Activated CD8-positive, alpha-beta T cell treated with anti-CD3 and anti-CD28 coated beads for 36 hours (primary cell): ENCODE measurements at regions of chr6 and their contacts with region 1.

Region 1: GRCh38 chr6:104682722-104683643 is 176.7 kb downstream of the HACE1 start:
- DNase-seq: peak; percentile 82
- ATAC-seq: peak; percentile 69
- H3K4me3 Mint-ChIP-seq: no peak overlapping the region
- H3K27ac Mint-ChIP-seq: no peak overlapping the region
- H3K4me1 Mint-ChIP-seq: peaks cover 3% of the 10 kb centered on the region
- H3K27me3 Mint-ChIP-seq: no peaks in the 10 kb centered on the region
- CTCF ChIP-seq: peak; percentile 92

Region 2: DNA sequence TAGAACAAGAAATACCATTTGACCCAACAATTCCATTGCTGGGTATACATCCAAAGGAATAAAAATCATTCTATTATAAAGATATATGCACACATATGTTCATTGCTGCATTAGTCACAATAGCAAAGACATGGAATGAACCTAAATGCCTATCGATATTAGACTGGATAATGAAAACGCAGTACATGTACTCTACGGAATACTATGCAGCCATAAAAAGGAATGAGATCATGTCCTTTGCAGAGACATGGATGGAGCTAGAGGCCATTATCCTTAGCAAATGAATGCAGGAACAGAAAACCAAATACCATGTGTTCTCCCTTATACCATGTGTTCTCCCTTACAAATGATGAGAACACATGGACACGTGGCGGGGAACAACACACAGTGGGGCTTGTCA is 13.5 kb before region 1 on chr6:
- CTCF ChIA-PET with region 1: no interaction called
- POLR2A ChIA-PET with region 1: no interaction called
- intact Hi-C with region 1: no loop called
- DNase-seq: no peak
- ATAC-seq: no peak
- H3K4me3 Mint-ChIP-seq: no peak overlapping the region
- H3K27ac Mint-ChIP-seq: no peak overlapping the region
- H3K4me1 Mint-ChIP-seq: no peaks in the 10 kb centered on the region
- H3K27me3 Mint-ChIP-seq: peaks cover 3% of the 10 kb centered on the region
- CTCF ChIP-seq: no peak

Region 3: GRCh38 chr6:104771258-104771832 is 88.4 kb after region 1 on chr6:
- CTCF ChIA-PET with region 1: interaction called, 13 read pairs
- POLR2A ChIA-PET with region 1: no interaction called
- intact Hi-C with region 1: loop called (anchors 1 kb)
- DNase-seq: no peak
- ATAC-seq: peak; percentile 56
- H3K4me3 Mint-ChIP-seq: no peak overlapping the region
- H3K27ac Mint-ChIP-seq: no peak overlapping the region
- H3K4me1 Mint-ChIP-seq: no peaks in the 10 kb centered on the region
- H3K27me3 Mint-ChIP-seq: no peaks in the 10 kb centered on the region
- CTCF ChIP-seq: peak; percentile 73